ENCODE measurements at regions of chr7 and their contacts with region 1.

Region 1: DNA sequence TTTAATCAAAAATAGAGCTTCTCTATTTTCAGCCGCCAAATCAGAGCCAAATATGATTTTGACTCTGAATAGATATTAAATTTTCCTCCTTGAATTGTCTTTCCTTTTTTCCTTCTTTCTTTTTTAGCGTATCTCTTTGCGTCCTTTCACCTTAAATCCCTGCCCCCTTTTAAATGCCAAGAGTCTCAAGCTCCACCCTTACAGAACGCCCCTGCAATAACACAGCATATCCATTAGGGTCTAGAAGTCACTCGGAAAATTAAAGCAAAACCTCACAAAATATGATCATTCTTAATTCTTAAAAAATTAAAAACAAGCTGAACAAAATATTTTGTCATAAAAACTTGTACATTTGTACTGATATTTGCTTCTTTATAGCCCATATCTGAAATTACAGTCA is 51.3 kb upstream of the GRM8 start:
- DNase-seq: no peak
- H3K4me3 ChIP-seq: no peak overlapping the region
- H3K27ac ChIP-seq: no peak overlapping the region
- H3K4me1 ChIP-seq: no peaks in the 10 kb centered on the region
- H3K27me3 ChIP-seq: no peaks in the 10 kb centered on the region
- CTCF ChIP-seq: no peak
- POLR2A ChIP-seq: no peak

Region 2: DNA sequence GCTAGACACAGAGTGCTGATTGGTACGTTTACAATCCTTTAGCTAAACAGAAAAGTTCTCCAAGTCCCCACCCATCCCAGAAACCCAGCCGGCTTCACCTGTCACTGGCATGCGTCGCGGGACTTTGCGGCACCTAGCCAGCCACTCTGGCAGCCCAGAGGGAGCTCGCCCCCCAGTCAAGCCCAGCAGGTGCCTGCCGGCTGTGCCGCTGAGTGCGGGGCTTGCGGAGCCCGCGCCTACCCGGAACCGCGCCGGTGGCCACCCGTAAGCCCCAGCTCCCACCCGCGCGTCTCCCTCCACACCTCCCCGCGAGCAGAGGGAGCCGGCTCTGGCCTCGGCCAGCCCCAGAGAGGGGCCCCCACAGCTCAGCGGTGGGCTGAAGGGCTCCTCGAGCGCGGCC is 497.5 kb before region 1 on chr7:
- CTCF ChIA-PET with region 1: no interaction called
- POLR2A ChIA-PET with region 1: no interaction called
- dilution Hi-C with region 1: no loop called
- intact Hi-C with region 1: no loop called
- DNase-seq: no peak
- H3K4me3 ChIP-seq: no peak overlapping the region
- H3K27ac ChIP-seq: no peak overlapping the region
- H3K4me1 ChIP-seq: no peaks in the 10 kb centered on the region
- H3K27me3 ChIP-seq: no peaks in the 10 kb centered on the region
- CTCF ChIP-seq: no peak
- POLR2A ChIP-seq: no peak

Region 3: GRCh38 chr7:127266047-127266446 is 38.0 kb before region 1 on chr7:
- CTCF ChIA-PET with region 1: no interaction called
- POLR2A ChIA-PET with region 1: no interaction called
- dilution Hi-C with region 1: no loop called
- intact Hi-C with region 1: loop called (anchors 1 kb)
- DNase-seq: no peak
- H3K4me3 ChIP-seq: no peak overlapping the region
- H3K27ac ChIP-seq: no peak overlapping the region
- H3K4me1 ChIP-seq: no peaks in the 10 kb centered on the region
- H3K27me3 ChIP-seq: no peaks in the 10 kb centered on the region
- CTCF ChIP-seq: no peak
- POLR2A ChIP-seq: no peak

Region 4: GRCh38 chr7:127571741-127572505 is 267.8 kb after region 1 on chr7:
- CTCF ChIA-PET with region 1: no interaction called
- POLR2A ChIA-PET with region 1: no interaction called
- dilution Hi-C with region 1: no loop called
- intact Hi-C with region 1: no loop called
- DNase-seq: no peak
- H3K4me3 ChIP-seq: no peak overlapping the region
- H3K27ac ChIP-seq: no peak overlapping the region
- H3K4me1 ChIP-seq: no peaks in the 10 kb centered on the region
- H3K27me3 ChIP-seq: no peaks in the 10 kb centered on the region
- CTCF ChIP-seq: no peak
- POLR2A ChIP-seq: no peak

Measured in endothelial cell of umbilical vein (primary cell).